Cardiac septum (tissue), 1 donor: ENCODE measurements at regions of chr19 and their contacts with region 1.

Region 1: GRCh38 chr19:55117636-55118391 is at the start of gene PPP1R12C:
- DNase-seq: peak; percentile 100
- total RNA-seq, gene PPP1R12C: 215 TPM

Region 2: GRCh38 chr19:55005684-55006488 is 111.9 kb before region 1 on chr19:
- intact Hi-C with region 1: no loop called
- DNase-seq: peak; percentile 60

Region 3: DNA sequence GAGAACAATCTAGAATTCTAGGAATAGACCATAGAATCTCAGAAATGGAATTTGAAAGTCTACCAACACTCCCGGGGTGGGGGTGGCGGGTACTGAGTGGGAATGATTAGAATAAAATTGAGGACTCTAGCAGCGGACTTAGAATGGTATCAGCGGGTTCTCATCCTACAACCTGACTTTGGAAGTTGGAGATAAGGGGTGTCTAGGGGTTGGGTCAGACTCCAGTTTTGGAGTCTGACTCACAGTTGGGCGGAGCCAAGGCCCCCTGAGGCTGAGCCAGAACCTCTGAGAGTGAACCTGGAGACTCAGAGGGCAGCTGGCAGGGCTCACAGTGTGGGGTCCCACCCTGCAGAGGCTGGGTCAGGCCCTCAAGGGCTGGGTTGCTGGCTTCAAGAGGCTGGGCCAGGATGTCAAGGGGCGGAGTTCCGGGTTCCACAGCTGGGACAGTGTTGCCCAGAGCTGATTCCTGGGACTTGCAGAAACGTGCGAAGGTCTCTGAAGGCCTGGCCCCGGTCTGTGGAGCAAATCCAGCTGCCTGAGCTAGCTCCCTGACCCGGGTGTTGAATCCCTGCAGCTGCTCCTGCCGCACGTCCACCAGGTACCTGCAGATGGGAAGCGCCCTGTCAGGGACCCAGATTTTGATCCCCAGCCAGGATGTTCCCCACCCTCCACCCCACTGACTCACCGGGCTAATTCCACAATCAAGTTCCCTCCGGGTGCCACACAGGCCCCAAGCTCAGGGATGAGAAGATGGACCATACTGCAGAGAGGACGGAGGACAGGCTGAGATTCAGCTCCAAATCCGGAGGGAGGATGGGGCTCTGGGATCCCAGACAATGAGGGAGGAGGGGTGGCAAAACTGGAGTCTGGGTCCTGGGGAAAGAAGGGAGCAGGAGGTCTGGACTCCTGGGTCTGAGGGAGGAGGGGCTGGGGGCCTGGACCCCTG is 41.3 kb after region 1 on chr19:
- intact Hi-C with region 1: loop called (anchors 2 kb)
- DNase-seq: peak; percentile 91